Calu3 (cell line): ENCODE measurements at regions of chr12 and their contacts with region 1.

Region 1: GRCh38 chr12:48851883-48852733 is at the start of gene DDX23:
- DNase-seq: peak; percentile 87
- H3K4me3 Mint-ChIP-seq: peak within 1 kb of the TSS; percentile 92
- H3K27ac Mint-ChIP-seq: peak within 1 kb of the TSS; percentile 95
- H3K4me1 Mint-ChIP-seq: peaks cover 28% of the 10 kb centered on the region
- H3K27me3 Mint-ChIP-seq: no peaks in the 10 kb centered on the region
- CTCF ChIP-seq: no peak
- total RNA-seq, gene DDX23: 80.8 and 89.6 TPM in 2 replicates

Region 2: GRCh38 chr12:48779869-48780268 is 72.2 kb before region 1 on chr12:
- CTCF ChIA-PET with region 1: no interaction called
- intact Hi-C with region 1: no loop called
- DNase-seq: no peak
- H3K4me3 Mint-ChIP-seq: no peak overlapping the region
- H3K27ac Mint-ChIP-seq: no peak overlapping the region
- H3K4me1 Mint-ChIP-seq: peaks cover 10% of the 10 kb centered on the region
- H3K27me3 Mint-ChIP-seq: no peaks in the 10 kb centered on the region
- CTCF ChIP-seq: no peak

Region 3: GRCh38 chr12:48882315-48882687 is 30.2 kb after region 1 on chr12:
- CTCF ChIA-PET with region 1: interaction called, 10 read pairs
- intact Hi-C with region 1: no loop called
- DNase-seq: peak; percentile 20
- H3K4me3 Mint-ChIP-seq: peak overlapping the region; percentile 50
- H3K27ac Mint-ChIP-seq: peak overlapping the region; percentile 85
- H3K4me1 Mint-ChIP-seq: peaks cover 33% of the 10 kb centered on the region
- H3K27me3 Mint-ChIP-seq: peaks cover 7% of the 10 kb centered on the region
- CTCF ChIP-seq: no peak

Region 4: GRCh38 chr12:48890657-48891418 is 38.7 kb after region 1 on chr12:
- CTCF ChIA-PET with region 1: interaction called, 61 read pairs
- intact Hi-C with region 1: loop called (anchors 1 kb)
- DNase-seq: peak; percentile 84
- H3K4me3 Mint-ChIP-seq: no peak overlapping the region
- H3K27ac Mint-ChIP-seq: no peak overlapping the region
- H3K4me1 Mint-ChIP-seq: peaks cover 8% of the 10 kb centered on the region
- H3K27me3 Mint-ChIP-seq: peaks cover 22% of the 10 kb centered on the region
- CTCF ChIP-seq: peak; percentile 55

Region 5: GRCh38 chr12:48977315-48978281 is 125.5 kb after region 1 on chr12:
- CTCF ChIA-PET with region 1: interaction called, 10 read pairs
- intact Hi-C with region 1: loop called (anchors 10 kb)
- DNase-seq: peak; percentile 69
- H3K4me3 Mint-ChIP-seq: peak overlapping the region; percentile 61
- H3K27ac Mint-ChIP-seq: no peak overlapping the region
- H3K4me1 Mint-ChIP-seq: peaks cover 46% of the 10 kb centered on the region
- H3K27me3 Mint-ChIP-seq: peaks cover 100% of the 10 kb centered on the region
- CTCF ChIP-seq: peak; percentile 75

Region 6: GRCh38 chr12:48995061-48995879 is 143.2 kb after region 1 on chr12:
- CTCF ChIA-PET with region 1: interaction called, 4 read pairs
- intact Hi-C with region 1: loop called (anchors 5 kb)
- DNase-seq: peak; percentile 80
- H3K4me3 Mint-ChIP-seq: peak overlapping the region; percentile 64
- H3K27ac Mint-ChIP-seq: no peak overlapping the region
- H3K4me1 Mint-ChIP-seq: peaks cover 17% of the 10 kb centered on the region
- H3K27me3 Mint-ChIP-seq: peaks cover 44% of the 10 kb centered on the region
- CTCF ChIP-seq: no peak